CD4-positive, alpha-beta memory T cell (primary cell): ENCODE measurements at regions of chr9 and their contacts with region 1.

Region 1: DNA sequence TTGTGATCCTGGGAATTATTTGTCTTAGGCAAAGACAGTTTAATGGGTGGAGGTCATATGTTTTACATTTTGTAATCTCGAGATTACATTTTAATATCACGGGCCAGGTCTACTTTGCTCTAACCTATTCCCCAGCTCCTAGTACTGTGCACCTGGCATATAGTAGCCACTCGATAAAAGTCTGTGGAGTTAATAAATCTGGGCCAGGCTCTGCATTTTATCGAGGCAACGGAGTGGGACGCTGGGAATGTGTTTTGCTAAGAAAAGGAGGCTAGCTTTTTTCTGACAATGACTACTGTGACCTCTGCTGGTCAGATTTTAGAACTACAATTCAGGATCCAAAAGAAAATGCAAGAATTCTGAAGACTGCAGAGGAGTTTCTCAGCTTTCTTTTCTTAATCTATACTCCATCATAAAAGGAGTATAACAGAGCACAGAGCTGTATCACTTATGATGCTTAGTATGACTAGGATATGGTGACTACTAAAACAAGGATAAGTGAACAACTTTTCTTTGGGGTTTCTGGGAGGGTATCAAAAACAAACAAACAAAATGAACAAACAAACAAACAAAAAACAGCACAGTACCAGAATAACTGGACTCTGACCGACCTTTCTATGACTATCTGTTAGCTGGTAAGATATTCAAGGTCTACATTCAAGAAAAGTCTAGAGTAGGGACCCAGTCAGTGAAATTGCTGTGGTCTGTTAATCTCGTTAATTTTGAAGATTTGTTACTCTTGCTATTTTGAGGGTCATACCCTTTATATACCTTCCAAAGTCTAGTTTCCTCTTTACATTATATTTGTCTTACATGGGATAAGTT is 46.1 kb upstream of the CER1 start:
- DNase-seq: peak in 4 of 5 donors; percentile 15 to 28 (median 18)
- H3K4me3 ChIP-seq: no peak overlapping the region
- H3K4me3 Mint-ChIP-seq: no peak overlapping the region
- H3K27ac ChIP-seq: no peak overlapping the region
- H3K27ac Mint-ChIP-seq: no peak overlapping the region
- H3K4me1 ChIP-seq: no peaks in the 10 kb centered on the region
- H3K4me1 Mint-ChIP-seq: peaks cover 0 to 1% (median 0%) of the 10 kb centered on the region in 4 donors
- H3K27me3 ChIP-seq: no peaks in the 10 kb centered on the region
- H3K27me3 Mint-ChIP-seq: peaks cover 1 to 6% of the 10 kb centered on the region in 2 donors

Region 2: DNA sequence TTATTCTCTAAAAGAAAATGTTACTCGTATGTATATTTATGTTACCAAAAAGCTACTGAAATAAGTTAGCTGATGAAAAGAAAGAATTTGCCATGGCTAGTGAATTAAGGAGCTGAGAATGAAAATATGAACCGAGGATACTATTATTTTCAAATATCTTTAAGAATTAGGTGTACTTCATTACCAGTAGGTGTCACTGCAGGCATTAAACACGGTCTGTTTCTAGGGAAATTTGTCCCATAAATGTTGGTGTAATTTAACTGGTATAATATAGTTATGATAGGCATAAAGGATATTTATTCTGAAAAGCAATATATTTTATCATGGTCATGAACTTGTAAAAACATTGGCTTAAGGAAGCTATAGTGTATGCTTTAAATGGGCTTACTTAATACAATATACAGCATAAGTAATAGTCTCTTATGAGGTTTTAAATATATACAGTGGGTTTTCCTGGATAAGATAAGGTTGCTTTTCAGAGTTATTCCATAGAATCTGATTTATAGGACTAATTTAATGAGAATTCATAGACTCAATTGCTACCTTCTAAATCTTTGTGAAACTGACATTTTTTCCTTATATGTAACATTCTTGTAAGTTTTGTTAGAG is 1416.7 kb before region 1 on chr9:
- CTCF ChIA-PET with region 1: no interaction called
- POLR2A ChIA-PET with region 1: no interaction called
- intact Hi-C with region 1: loop called (anchors 5 kb)
- DNase-seq: no peak
- H3K4me3 ChIP-seq: no peak overlapping the region
- H3K4me3 Mint-ChIP-seq: no peak overlapping the region
- H3K27ac ChIP-seq: no peak overlapping the region
- H3K27ac Mint-ChIP-seq: no peak overlapping the region
- H3K4me1 ChIP-seq: no peaks in the 10 kb centered on the region
- H3K4me1 Mint-ChIP-seq: no peaks in the 10 kb centered on the region
- H3K27me3 ChIP-seq: no peaks in the 10 kb centered on the region
- H3K27me3 Mint-ChIP-seq: peaks cover 0 to 1% of the 10 kb centered on the region in 2 donors

Region 3: DNA sequence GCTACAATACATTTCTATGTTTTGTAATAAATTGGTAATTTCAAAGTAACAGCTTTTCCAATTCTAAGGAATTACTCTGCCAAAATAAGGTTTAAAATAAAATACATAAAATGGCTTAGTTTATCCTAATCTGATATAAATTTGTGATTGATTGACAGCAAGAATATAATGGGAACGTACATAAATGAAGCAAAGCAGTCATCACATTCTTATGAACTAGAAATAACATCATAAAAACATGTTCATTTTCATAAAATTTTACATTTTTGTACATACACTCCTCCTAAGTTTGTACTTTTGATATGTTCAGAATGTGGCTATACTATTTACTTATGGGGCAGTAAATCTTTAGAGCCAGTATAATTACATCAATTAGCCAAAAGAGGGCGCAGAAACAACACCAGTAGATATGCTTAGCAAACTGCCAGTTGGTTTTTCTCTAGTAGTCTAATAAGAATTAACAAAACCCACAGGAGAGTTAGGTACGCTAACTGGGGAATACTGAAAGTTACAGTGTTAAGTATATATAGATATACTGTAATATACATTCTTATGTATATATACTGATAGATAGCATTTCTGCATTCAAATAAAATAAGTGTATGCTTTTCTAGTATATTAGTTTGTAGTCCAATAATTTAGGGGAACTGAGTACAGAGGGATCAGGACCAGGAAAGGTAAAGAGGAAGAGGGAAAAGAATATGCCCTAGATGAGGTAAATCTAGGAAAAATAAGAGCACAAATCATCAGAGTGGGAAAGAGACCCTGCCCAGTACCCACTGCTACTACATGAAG is 152.2 kb before region 1 on chr9:
- CTCF ChIA-PET with region 1: interaction called, 22 read pairs
- POLR2A ChIA-PET with region 1: no interaction called
- intact Hi-C with region 1: no loop called
- DNase-seq: peak in 4 of 5 donors; percentile 19 to 42 (median 32)
- H3K4me3 ChIP-seq: no peak overlapping the region
- H3K4me3 Mint-ChIP-seq: no peak overlapping the region
- H3K27ac ChIP-seq: no peak overlapping the region
- H3K27ac Mint-ChIP-seq: no peak overlapping the region
- H3K4me1 ChIP-seq: no peaks in the 10 kb centered on the region
- H3K4me1 Mint-ChIP-seq: no peaks in the 10 kb centered on the region
- H3K27me3 ChIP-seq: no peaks in the 10 kb centered on the region
- H3K27me3 Mint-ChIP-seq: no peaks in the 10 kb centered on the region

Region 4: DNA sequence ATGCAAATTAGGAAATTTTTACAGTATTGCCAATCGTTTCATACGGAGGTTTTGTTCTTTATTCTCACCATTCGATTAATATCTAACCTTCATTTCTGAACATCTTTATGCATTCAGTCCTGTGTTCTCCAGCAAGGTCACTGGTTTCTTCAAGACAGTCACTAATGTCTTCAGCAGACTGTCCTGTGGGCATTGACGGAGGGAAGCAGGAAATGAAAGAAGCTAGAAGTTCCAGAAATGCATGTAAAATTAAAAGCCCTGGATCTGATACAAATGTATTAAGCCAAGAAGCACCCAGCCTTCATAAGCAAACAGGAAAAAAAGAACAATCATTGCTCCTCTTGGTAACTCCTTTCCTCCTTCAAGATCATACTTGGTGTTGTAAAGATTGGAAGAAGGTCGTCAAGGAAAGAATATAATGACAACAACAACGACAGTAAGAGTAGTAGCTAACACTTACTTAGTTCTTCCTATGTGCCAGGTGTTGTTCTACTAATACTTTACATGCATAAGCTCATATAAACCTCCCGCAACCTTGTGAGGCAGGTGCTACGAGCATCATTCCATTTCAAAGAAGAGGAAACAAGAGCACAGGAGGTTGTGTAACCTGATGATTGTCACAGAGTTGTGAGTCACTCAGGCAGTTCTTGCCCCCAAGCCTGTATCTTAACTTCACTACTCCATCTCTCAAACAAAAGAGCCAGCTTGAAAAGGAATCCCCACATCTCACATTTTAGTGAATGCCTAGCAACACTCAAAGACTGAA is 13.9 kb after region 1 on chr9:
- CTCF ChIA-PET with region 1: interaction called, 14 read pairs
- POLR2A ChIA-PET with region 1: no interaction called
- intact Hi-C with region 1: no loop called
- DNase-seq: no peak
- H3K4me3 ChIP-seq: no peak overlapping the region
- H3K4me3 Mint-ChIP-seq: no peak overlapping the region
- H3K27ac ChIP-seq: no peak overlapping the region
- H3K27ac Mint-ChIP-seq: no peak overlapping the region
- H3K4me1 ChIP-seq: no peaks in the 10 kb centered on the region
- H3K4me1 Mint-ChIP-seq: no peaks in the 10 kb centered on the region
- H3K27me3 ChIP-seq: no peaks in the 10 kb centered on the region
- H3K27me3 Mint-ChIP-seq: peaks cover 2 to 4% of the 10 kb centered on the region in 2 donors

Region 5: DNA sequence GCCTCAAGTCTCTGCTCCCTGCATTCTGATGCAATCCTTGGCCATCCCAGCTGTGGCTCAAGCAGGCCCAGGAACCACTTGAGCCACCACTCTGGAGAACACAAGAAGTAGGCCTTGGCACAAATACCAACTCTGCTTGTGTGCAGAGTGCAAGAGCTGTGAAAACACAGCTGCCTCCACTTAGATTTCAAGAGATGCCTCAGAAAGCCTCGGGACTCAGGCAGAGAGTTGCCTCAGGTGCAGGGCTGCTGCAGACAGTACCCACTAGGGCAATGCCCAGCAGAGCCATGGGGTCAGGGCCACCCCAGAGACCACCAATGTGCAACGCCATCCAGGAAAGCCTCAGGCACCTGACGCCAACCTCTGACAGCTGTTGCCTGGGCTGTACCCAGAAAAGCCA is 59.2 kb after region 1 on chr9:
- CTCF ChIA-PET with region 1: no interaction called
- POLR2A ChIA-PET with region 1: no interaction called
- intact Hi-C with region 1: loop called (anchors 10 kb)
- DNase-seq: no peak
- H3K4me3 ChIP-seq: no peak overlapping the region
- H3K4me3 Mint-ChIP-seq: no peak overlapping the region
- H3K27ac ChIP-seq: no peak overlapping the region
- H3K27ac Mint-ChIP-seq: no peak overlapping the region
- H3K4me1 ChIP-seq: no peaks in the 10 kb centered on the region
- H3K4me1 Mint-ChIP-seq: no peaks in the 10 kb centered on the region
- H3K27me3 ChIP-seq: no peaks in the 10 kb centered on the region
- H3K27me3 Mint-ChIP-seq: peaks cover 3% of the 10 kb centered on the region in 2 donors

Region 6: GRCh38 chr9:14945351-14945750 is 176.7 kb after region 1 on chr9:
- CTCF ChIA-PET with region 1: no interaction called
- POLR2A ChIA-PET with region 1: no interaction called
- intact Hi-C with region 1: no loop called
- DNase-seq: no peak
- H3K4me3 ChIP-seq: no peak overlapping the region
- H3K4me3 Mint-ChIP-seq: no peak overlapping the region
- H3K27ac ChIP-seq: no peak overlapping the region
- H3K27ac Mint-ChIP-seq: no peak overlapping the region
- H3K4me1 ChIP-seq: no peaks in the 10 kb centered on the region
- H3K4me1 Mint-ChIP-seq: no peaks in the 10 kb centered on the region
- H3K27me3 ChIP-seq: no peaks in the 10 kb centered on the region
- H3K27me3 Mint-ChIP-seq: peaks cover 0 to 2% of the 10 kb centered on the region in 2 donors

Region 7: DNA sequence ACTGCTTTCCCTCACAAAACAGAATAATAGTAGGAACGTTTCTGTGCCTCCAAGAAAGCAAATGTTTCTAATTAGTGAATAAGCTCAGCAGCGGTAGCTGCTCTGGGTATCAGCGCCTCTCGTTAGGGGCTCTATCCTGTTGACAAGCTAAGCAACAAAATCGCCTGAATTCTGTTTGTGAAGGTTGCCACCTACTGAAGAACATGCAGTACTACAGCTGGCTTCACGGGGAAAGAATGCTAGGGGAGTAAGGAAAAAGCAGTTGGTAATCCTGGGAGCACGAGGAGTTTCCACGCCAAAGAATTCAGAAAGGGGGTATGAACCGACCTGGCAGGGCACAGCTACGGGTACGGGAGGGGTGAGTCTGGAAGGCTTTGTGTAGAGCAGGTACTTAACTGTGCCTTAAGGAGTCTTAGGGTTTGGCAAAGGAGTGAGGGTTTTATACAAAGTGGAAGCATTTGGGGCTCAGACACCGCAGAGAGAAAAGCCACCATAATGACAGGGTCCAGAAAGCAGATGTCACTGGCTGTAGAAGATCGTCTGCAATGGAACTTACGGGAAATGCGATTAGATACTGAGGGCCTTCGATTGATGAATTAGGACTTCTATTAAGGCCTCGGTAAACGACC is 366.7 kb after region 1 on chr9:
- CTCF ChIA-PET with region 1: interaction called, 5 read pairs
- POLR2A ChIA-PET with region 1: no interaction called
- intact Hi-C with region 1: loop called (anchors 1 kb)
- DNase-seq: peak; percentile 41 to 59 (median 54)
- H3K4me3 ChIP-seq: no peak overlapping the region
- H3K4me3 Mint-ChIP-seq: peak overlapping the region in 2 of 8 donors; percentile 33 to 42
- H3K27ac ChIP-seq: no peak overlapping the region
- H3K27ac Mint-ChIP-seq: no peak overlapping the region
- H3K4me1 ChIP-seq: no peaks in the 10 kb centered on the region
- H3K4me1 Mint-ChIP-seq: peaks cover 4 to 5% (median 5%) of the 10 kb centered on the region in 4 donors
- H3K27me3 ChIP-seq: no peaks in the 10 kb centered on the region
- H3K27me3 Mint-ChIP-seq: peaks cover 0 to 1% of the 10 kb centered on the region in 2 donors